Dendritic cell treated with granulocyte-macrophage colony-stimulating factor and Interleukin-4, amounts not matched to agents 40 ng/mL and 50 ng/mL, for 4 days (primary cell): ENCODE measurements at regions of chrX and their contacts with region 1.

Region 1: DNA sequence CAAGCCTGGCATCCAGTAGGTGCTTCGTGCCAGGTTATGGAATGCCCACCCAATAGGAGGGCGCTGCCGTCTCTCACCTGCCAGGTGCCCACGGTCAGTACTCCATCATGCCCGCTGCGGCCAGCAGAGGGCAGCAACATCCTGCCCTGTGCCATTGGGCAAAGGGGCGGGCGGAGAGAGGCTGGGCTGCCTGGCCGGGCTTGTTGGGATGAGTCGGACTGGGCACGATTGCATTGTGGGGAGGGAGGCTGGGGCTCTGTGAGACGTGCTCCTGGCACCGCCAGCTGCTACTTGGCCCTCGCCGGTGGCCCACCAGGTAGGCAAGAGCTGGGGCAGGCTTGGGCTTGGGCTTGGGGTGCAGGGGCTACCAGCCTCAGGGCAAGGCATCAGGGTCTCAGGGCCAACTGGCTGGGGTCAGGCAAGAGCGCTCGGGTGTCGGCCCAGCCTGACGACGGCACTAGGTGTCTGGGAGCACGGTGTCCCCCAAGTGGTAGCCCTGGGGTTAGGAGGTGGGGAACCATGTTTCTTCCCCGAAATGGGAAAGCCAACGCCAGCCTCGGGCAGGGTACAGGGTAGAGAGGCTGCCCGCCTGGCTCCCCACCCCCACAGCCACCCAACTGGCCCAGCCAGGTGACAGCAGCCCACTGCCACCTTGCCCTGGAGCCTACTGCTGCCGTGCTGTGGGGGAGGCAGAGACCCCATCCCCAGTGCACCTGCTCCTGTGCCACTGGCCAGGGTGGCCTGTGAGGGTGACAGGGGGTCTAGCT is at the start of gene PLXNB3:
- H3K4me3 Mint-ChIP-seq: no peak within 1 kb of the TSS
- H3K27ac Mint-ChIP-seq: no peak within 1 kb of the TSS
- H3K4me1 Mint-ChIP-seq: peaks cover 19% of the 10 kb centered on the region
- H3K27me3 Mint-ChIP-seq: peaks cover 25% of the 10 kb centered on the region

Region 2: GRCh38 chrX:153599192-153600031 is 164.8 kb before region 1 on chrX:
- intact Hi-C with region 1: no loop called
- H3K4me3 Mint-ChIP-seq: peak overlapping the region; percentile 80
- H3K27ac Mint-ChIP-seq: peak overlapping the region; percentile 72
- H3K4me1 Mint-ChIP-seq: peaks cover 52% of the 10 kb centered on the region
- H3K27me3 Mint-ChIP-seq: no peaks in the 10 kb centered on the region

Region 3: GRCh38 chrX:153953342-153953830 is 189.2 kb after region 1 on chrX:
- intact Hi-C with region 1: loop called (anchors 5 kb)
- H3K4me3 Mint-ChIP-seq: no peak overlapping the region
- H3K27ac Mint-ChIP-seq: no peak overlapping the region
- H3K4me1 Mint-ChIP-seq: peaks cover 19% of the 10 kb centered on the region
- H3K27me3 Mint-ChIP-seq: no peaks in the 10 kb centered on the region